Dorsolateral prefrontal cortex (tissue), 120 donors: ENCODE measurements at regions of chr1 and their contacts with region 1.

Region 1: GRCh38 chr1:214328770-214329469 is 48.0 kb downstream of the SMYD2 start:
- DNase-seq: peak; percentile 73 to 90 (median 86)
- H3K4me3 ChIP-seq: no peak overlapping the region
- H3K27ac ChIP-seq: no peak overlapping the region
- H3K27me3 ChIP-seq: no peaks in the 10 kb centered on the region
- CTCF ChIP-seq: peak; percentile 67 to 98 (median 93)

Region 2: GRCh38 chr1:213374369-213374768 is 954.6 kb before region 1 on chr1:
- intact Hi-C with region 1: loop called in 1 of 2 experiments (anchors 5 kb)
- DNase-seq: peak in 9 of 10 donors; percentile 50 to 77 (median 68)
- H3K4me3 ChIP-seq: no peak overlapping the region
- H3K27ac ChIP-seq: no peak overlapping the region
- H3K27me3 ChIP-seq: no peaks in the 10 kb centered on the region
- CTCF ChIP-seq: peak; percentile 76 to 95 (median 86)

Region 3: GRCh38 chr1:213600879-213601278 is 728.0 kb before region 1 on chr1:
- intact Hi-C with region 1: no loop called
- DNase-seq: peak in 1 of 10 donors; percentile 15
- H3K4me3 ChIP-seq: no peak overlapping the region
- H3K27ac ChIP-seq: no peak overlapping the region
- H3K27me3 ChIP-seq: peaks cover 0 to 6% (median 0%) of the 10 kb centered on the region in 45 donors
- CTCF ChIP-seq: no peak

Region 4: DNA sequence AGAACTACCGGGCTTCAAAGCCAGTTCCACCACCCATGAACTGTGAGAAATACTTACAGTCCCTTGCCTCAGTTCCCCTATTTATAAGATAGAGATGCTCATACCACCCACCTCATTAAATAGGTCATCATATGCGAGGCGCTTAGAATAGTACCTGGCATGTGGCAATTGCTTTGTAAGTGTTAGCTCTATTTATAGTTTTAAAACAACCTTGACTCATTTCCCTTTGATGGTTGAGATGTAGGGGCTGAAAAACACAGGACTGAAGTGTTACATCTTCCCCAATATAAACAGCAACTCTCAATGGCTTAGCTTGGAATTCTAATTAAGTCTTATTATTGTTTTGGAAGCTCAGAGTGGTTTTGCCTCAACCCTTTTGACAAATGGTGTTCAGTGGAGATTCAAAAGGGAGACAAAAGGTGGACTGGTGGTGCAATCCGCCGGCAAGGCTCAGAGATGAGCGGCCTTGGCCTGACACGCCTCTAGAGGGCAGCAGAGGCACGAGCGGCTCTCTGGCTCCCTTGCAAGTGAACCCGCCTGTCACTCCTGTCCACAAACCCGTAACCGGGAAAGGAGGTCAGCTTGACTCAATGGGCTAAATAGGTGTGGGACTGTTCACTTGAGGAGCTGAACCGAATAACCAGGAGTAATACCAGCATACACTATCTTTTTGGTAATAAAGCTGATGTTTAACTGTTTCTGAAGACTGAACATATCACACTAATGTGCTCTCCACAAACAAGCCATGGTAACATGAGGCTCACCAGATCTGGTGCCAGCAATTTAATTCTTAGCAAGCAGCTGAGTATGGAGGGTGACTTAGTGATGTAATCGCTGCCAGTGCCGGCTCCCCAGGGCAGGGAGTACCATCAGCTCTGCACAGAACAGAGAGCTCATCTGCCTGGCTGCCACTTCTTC is 67.5 kb before region 1 on chr1:
- intact Hi-C with region 1: loop called (anchors 1 to 5 kb)
- DNase-seq: peak; percentile 74 to 91 (median 84)
- H3K4me3 ChIP-seq: peak overlapping the region in 26 of 59 donors; percentile 2 to 46 (median 24)
- H3K27ac ChIP-seq: no peak overlapping the region
- H3K27me3 ChIP-seq: peaks cover 0 to 39% (median 15%) of the 10 kb centered on the region in 45 donors
- CTCF ChIP-seq: peak; percentile 46 to 98 (median 90)

Region 5: GRCh38 chr1:214584805-214585766 is 256.2 kb after region 1 on chr1:
- intact Hi-C with region 1: loop called (anchors 2 to 5 kb)
- DNase-seq: no peak
- H3K4me3 ChIP-seq: no peak overlapping the region
- H3K27ac ChIP-seq: no peak overlapping the region
- H3K27me3 ChIP-seq: no peaks in the 10 kb centered on the region
- CTCF ChIP-seq: peak in 54 of 56 donors; percentile 39 to 80 (median 58)

Region 6: GRCh38 chr1:214632091-214632490 is 303.2 kb after region 1 on chr1:
- intact Hi-C with region 1: loop called (anchors 5 to 10 kb)
- DNase-seq: no peak
- H3K4me3 ChIP-seq: no peak overlapping the region
- H3K27ac ChIP-seq: no peak overlapping the region
- H3K27me3 ChIP-seq: peaks cover 0 to 4% (median 0%) of the 10 kb centered on the region in 45 donors
- CTCF ChIP-seq: no peak